ENCODE measurements at regions of chr10 and their contacts with region 1.

Region 1: DNA sequence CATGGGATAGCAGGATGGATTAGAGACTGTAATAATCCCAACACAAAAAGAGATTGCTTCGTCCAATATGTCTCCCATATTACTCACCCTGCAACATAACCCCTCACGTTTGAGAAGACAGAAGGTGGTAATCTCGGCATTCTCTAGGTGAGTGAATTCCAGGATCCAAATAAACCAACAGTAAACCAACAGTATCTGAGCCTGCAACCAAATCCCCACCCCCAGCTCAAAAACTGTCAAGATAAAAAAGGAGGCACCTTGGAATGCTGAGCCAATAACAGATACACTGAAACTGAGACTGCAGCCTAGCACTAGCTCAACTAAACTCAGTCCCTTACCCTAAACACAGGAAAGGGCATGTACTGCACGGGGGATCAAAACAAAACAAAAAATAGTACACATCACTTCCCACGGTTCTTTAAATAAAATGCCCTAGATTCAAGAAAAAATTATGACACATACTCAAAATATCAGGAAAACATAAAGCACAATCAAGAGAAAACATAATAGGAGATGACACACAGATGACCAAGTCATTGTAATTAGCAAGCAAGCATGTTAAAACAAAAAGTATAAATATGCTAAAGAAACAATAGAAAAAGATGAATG is 28.0 kb downstream of the IPMK start:
- DNase-seq: no peak
- ATAC-seq: no peak; the same call in 1 of the 2 replicates
- H3K4me3 ChIP-seq: no peak overlapping the region
- H3K27ac ChIP-seq: peak overlapping the region; percentile 35
- H3K4me1 ChIP-seq: peaks cover 30% of the 10 kb centered on the region
- H3K27me3 ChIP-seq: no peaks in the 10 kb centered on the region
- CTCF ChIP-seq: no peak

Region 2: GRCh38 chr10:58254644-58255043 is 15.0 kb after region 1 on chr10:
- CTCF ChIA-PET with region 1: no interaction called
- POLR2A ChIA-PET with region 1: interaction called, 13 read pairs
- in situ Hi-C with region 1: no loop called
- intact Hi-C with region 1: no loop called
- DNase-seq: no peak
- ATAC-seq: no peak
- H3K4me3 ChIP-seq: no peak overlapping the region
- H3K27ac ChIP-seq: no peak overlapping the region
- H3K4me1 ChIP-seq: no peaks in the 10 kb centered on the region
- H3K27me3 ChIP-seq: no peaks in the 10 kb centered on the region
- CTCF ChIP-seq: no peak

Measured in Panc1 (cell line).